ENCODE measurements at regions of chr13 and their contacts with region 1.

Region 1: DNA sequence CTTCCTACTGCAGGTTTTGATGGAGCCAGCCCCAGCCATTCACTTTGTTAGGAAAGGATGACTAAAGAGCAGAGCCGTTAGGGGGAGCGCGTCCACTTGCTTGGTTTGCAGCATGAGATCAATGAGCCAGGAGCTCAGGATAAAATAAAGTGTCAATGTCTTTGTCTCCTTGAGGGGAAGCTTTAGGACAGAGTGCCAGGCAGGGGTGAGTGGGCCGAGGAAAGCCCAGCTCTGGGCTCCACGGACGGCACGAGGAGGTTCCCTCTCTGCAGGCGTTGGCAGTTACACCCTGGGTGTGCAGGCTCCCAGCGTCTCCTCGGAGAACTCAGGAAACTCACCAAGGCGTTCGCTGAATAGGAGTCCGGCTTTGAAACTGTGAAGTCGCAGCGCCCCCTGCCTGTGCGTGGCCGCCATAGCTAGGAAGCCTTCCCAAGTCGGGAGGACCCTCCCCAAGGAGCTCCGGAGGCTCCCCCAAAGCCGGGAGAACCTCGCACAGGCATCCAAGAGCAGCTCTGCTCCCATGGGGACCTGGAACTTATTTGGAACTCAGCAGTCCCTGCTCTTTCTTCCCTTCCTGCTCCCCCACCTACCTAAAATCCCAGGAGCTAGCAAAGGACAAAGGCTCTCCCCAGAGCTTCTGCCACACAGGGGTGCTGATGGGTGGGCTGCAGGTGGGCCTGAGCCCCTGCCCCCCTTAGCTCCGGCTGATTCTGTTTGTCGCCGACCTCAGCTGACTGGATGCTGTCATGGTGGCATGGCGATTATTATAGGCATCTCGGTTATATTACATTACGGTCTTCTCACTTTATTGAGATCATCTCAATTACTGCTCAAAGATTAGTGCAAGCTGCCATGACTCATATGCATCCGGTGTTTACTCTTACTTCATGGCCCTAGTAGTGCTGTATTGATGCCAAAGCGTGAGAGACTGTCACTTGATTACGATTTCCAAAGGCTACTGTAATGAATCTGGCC is 34.4 kb downstream of the GSX1 start:
- DNase-seq: peak; percentile 81
- ATAC-seq: peak; percentile 98
- H3K4me3 ChIP-seq: peak overlapping the region; percentile 23
- H3K27ac ChIP-seq: no peak overlapping the region
- H3K4me1 ChIP-seq: no peaks in the 10 kb centered on the region
- H3K27me3 ChIP-seq: peaks cover 29% of the 10 kb centered on the region
- CTCF ChIP-seq: peak; percentile 92
- POLR2A ChIP-seq: no peak
- RAD21 ChIP-seq: peak; percentile 95

Region 2: DNA sequence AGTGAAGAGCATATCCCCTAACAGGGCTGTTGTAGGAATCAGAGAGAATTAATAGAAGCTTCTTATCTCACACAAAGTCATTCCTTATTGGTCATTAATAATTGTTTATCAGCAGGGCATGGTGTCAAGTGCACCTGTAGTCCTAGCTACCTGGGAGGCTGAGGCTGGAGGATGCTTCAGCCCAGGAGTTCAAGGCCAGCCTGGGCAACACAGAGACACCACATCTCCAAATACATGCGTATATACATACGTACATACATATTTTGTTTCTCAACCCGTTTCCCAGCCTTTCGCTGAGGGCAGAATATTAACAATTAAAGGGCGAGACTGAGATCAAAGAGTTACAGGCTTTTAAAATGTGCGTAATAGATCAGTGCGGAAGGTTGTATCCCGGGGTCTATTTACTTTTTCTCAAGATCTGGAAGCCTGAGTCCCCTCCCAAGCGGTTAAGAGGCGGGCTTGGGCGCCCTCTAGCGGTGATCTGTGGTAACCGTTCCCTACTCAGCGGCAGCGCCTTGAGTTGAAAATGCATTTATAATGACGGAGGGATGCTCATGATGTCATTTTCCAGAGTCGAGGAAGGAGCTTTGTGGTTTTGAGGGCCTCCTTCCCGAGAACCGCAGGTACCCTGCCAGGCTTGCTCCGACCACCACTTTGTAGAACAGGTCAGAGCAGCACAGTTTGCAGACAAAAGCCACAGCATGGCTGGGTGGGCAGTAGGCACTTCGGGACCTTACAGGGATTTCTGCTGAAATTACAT is 896.5 kb before region 1 on chr13:
- CTCF ChIA-PET with region 1: no interaction called
- POLR2A ChIA-PET with region 1: no interaction called
- dilution Hi-C with region 1: no loop called
- in situ Hi-C with region 1: loop called (anchors 25 kb)
- intact Hi-C with region 1: no loop called
- DNase-seq: peak; percentile 64
- ATAC-seq: peak; percentile 98
- H3K4me3 ChIP-seq: no peak overlapping the region
- H3K27ac ChIP-seq: no peak overlapping the region
- H3K4me1 ChIP-seq: no peaks in the 10 kb centered on the region
- H3K27me3 ChIP-seq: peaks cover 23% of the 10 kb centered on the region
- CTCF ChIP-seq: peak; percentile 89
- POLR2A ChIP-seq: no peak
- RAD21 ChIP-seq: peak; percentile 75

Region 3: GRCh38 chr13:27362064-27362883 is 464.4 kb before region 1 on chr13:
- CTCF ChIA-PET with region 1: interaction called, 28 read pairs
- POLR2A ChIA-PET with region 1: no interaction called
- dilution Hi-C with region 1: no loop called
- in situ Hi-C with region 1: no loop called
- intact Hi-C with region 1: loop called (anchors 1 kb)
- DNase-seq: peak; percentile 71
- ATAC-seq: peak; percentile 97
- H3K4me3 ChIP-seq: peak overlapping the region; percentile 61
- H3K27ac ChIP-seq: peak overlapping the region; percentile 38; the same call in 1 of the 2 replicates
- H3K4me1 ChIP-seq: peaks cover 4% of the 10 kb centered on the region; the same call in 1 of the 2 replicates
- H3K27me3 ChIP-seq: peaks cover 12% of the 10 kb centered on the region
- CTCF ChIP-seq: peak; percentile 95
- POLR2A ChIP-seq: no peak
- RAD21 ChIP-seq: peak; percentile 95

Region 4: DNA sequence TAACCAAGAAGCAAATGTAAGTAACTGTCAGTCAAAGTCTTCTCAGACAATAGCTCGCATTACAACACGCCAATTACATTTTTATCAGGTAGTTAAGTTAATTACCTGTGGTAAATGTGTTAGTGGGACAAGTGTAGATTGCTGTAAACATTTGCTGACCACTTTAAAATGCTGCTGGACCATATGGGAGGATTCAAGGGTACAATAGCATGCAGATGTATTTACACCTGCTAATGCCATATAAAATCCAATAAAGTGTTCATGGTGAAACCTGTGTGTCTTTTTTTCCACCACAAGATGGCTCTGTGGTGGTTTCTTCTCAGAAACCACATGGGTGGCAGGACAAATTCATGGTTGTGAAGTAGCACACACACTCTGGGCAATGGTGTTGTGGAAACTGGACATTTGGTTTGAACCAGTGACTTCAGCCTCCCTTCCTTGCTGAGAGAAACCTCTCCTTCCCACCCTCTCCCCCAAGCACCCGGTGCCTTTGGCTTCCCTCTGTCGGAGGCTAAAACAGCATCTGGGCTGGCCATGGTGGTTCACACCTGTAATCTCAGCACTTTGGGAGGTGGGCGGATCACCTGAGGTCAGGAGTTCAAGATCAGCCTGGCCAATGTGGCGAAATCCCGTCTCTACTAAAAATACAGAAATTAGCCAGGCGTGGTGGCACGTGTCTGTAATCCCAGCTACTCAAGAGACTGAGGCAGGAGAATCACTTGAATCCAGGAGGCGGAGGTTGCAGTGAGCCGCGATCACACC is 420.3 kb before region 1 on chr13:
- CTCF ChIA-PET with region 1: interaction called, 13 read pairs
- POLR2A ChIA-PET with region 1: no interaction called
- dilution Hi-C with region 1: no loop called
- in situ Hi-C with region 1: no loop called
- intact Hi-C with region 1: loop called (anchors 1 kb)
- DNase-seq: peak; percentile 49
- ATAC-seq: peak; percentile 38; the same call in 1 of the 2 replicates
- H3K4me3 ChIP-seq: no peak overlapping the region
- H3K27ac ChIP-seq: no peak overlapping the region
- H3K4me1 ChIP-seq: peaks cover 4% of the 10 kb centered on the region; the same call in 1 of the 2 replicates
- H3K27me3 ChIP-seq: peaks cover 23% of the 10 kb centered on the region
- CTCF ChIP-seq: peak; percentile 58
- POLR2A ChIP-seq: no peak
- RAD21 ChIP-seq: peak; percentile 41; the same call in 1 of the 2 replicates

Region 5: DNA sequence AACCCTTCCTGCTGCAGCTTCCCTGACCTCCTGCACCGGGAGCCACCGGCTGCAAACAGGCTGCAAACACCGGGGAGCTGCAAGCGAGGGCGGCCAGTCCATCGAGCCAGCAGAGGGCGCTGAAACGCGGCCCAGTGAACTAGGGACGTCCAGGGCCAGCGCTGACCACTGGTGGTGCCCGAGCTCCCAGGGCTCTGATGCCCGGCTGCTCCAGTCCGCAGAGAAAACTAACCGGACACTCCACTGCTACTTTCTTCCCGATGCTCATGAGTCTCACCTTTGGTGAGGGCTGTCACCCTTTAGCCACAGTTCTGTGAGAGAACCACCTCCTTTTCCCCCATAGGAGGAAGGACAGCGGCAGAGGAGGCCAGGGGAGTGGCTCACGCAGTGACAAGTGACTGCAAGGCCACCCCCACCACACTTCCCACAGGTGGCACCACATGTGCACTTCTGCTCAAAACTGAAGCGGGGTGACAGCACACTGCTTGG is 293.5 kb before region 1 on chr13:
- CTCF ChIA-PET with region 1: interaction called, 33 read pairs
- POLR2A ChIA-PET with region 1: no interaction called
- dilution Hi-C with region 1: no loop called
- in situ Hi-C with region 1: loop called (anchors 5 kb)
- intact Hi-C with region 1: loop called (anchors 1 kb)
- DNase-seq: peak; percentile 59
- ATAC-seq: peak; percentile 100
- H3K4me3 ChIP-seq: no peak overlapping the region
- H3K27ac ChIP-seq: no peak overlapping the region
- H3K4me1 ChIP-seq: no peaks in the 10 kb centered on the region
- H3K27me3 ChIP-seq: peaks cover 4% of the 10 kb centered on the region
- CTCF ChIP-seq: peak; percentile 94
- POLR2A ChIP-seq: 0 out of 2 replicates have a peak, but pooled peaks have one; percentile 32
- RAD21 ChIP-seq: peak; percentile 84

Region 6: GRCh38 chr13:27980280-27980998 is 153.8 kb after region 1 on chr13:
- CTCF ChIA-PET with region 1: interaction called, 14 read pairs
- POLR2A ChIA-PET with region 1: no interaction called
- dilution Hi-C with region 1: no loop called
- in situ Hi-C with region 1: loop called (anchors 5 kb)
- intact Hi-C with region 1: loop called (anchors 1 kb)
- DNase-seq: no peak
- ATAC-seq: no peak
- H3K4me3 ChIP-seq: no peak overlapping the region
- H3K27ac ChIP-seq: no peak overlapping the region
- H3K4me1 ChIP-seq: no peaks in the 10 kb centered on the region; the same call in 1 of the 2 replicates
- H3K27me3 ChIP-seq: peaks cover 77% of the 10 kb centered on the region
- CTCF ChIP-seq: no peak
- POLR2A ChIP-seq: no peak
- RAD21 ChIP-seq: no peak

Region 7: GRCh38 chr13:28843639-28844038 is 1017.0 kb after region 1 on chr13:
- CTCF ChIA-PET with region 1: no interaction called
- POLR2A ChIA-PET with region 1: no interaction called
- dilution Hi-C with region 1: no loop called
- in situ Hi-C with region 1: no loop called
- intact Hi-C with region 1: no loop called
- DNase-seq: no peak
- ATAC-seq: no peak
- H3K4me3 ChIP-seq: no peak overlapping the region
- H3K27ac ChIP-seq: no peak overlapping the region
- H3K4me1 ChIP-seq: no peaks in the 10 kb centered on the region
- H3K27me3 ChIP-seq: no peaks in the 10 kb centered on the region
- CTCF ChIP-seq: no peak
- POLR2A ChIP-seq: no peak
- RAD21 ChIP-seq: no peak

Measured in IMR-90 (cell line).